ENCODE measurements at regions of chr16 and their contacts with region 1.

Region 1: GRCh38 chr16:56856876-56857447 is 8.0 kb upstream of the SLC12A3 start:
- DNase-seq: no peak
- H3K4me3 Mint-ChIP-seq: no peak overlapping the region
- H3K27ac Mint-ChIP-seq: no peak overlapping the region
- H3K4me1 Mint-ChIP-seq: peaks cover 25% of the 10 kb centered on the region
- H3K27me3 Mint-ChIP-seq: no peaks in the 10 kb centered on the region

Region 2: DNA sequence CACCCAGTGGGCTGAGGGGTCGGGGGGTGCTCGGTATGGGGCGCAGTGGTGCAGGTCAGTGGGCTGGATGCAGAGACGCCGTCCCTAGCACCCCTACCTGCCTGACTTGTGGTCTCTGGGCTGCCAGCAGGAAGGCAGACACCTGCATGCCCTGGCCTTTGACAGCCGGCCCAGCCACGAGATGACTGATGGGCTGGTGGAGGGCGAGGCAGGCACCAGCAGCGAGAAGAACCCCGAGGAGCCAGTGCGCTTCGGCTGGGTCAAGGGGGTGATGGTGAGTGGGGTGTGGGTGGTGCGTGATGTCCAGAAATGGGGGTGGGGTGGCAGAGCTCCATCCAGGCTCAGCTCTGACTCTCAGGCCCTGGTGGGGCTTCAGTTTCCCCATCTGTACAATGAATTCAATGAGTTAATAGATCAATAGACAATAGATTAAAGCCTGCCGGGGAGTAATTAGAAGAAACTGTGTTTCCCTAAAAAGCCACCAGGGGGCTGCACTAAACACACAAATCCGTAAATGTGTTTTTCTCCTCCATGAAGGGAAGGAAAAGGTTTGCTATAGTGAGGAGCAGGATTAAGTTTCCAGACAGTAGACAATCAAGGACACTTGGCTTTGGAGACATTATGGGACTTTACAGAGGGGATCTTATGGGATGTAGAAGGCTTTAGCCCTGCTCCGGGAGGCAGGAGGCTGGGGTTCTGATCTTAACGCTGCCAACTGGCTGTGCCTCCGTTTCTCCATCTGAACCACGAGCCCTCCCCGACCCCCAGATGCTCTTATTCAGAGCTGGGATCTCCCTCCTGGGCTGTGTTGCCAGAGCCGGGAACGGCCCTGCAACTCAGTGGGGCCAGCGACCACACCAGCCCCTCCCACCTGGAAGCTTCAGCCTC is 10.2 kb after region 1 on chr16:
- CTCF ChIA-PET with region 1: interaction called, 16 read pairs
- intact Hi-C with region 1: no loop called
- DNase-seq: peak; percentile 64
- H3K4me3 Mint-ChIP-seq: no peak overlapping the region
- H3K27ac Mint-ChIP-seq: no peak overlapping the region
- H3K4me1 Mint-ChIP-seq: peaks cover 15% of the 10 kb centered on the region
- H3K27me3 Mint-ChIP-seq: no peaks in the 10 kb centered on the region